Stomach (tissue), 19 donors: ENCODE measurements at regions of chr3 and their contacts with region 1.

Region 1: GRCh38 chr3:79032686-79033318 is 735.0 kb downstream of the ROBO1 start:
- DNase-seq: peak in 1 of 2 donors; percentile 81
- H3K4me3 ChIP-seq: no peak overlapping the region
- H3K27ac ChIP-seq: no peak overlapping the region
- H3K4me1 ChIP-seq: no peaks in the 10 kb centered on the region
- H3K27me3 ChIP-seq: no peaks in the 10 kb centered on the region
- CTCF ChIP-seq: peak in 5 of 7 experiments; percentile 6 to 52 (median 47)
- EP300 ChIP-seq: no peak
- POLR2A ChIP-seq: no peak

Region 2: GRCh38 chr3:78660957-78661356 is 371.8 kb before region 1 on chr3:
- intact Hi-C with region 1: loop called (anchors 5 kb)
- DNase-seq: no peak
- H3K4me3 ChIP-seq: no peak overlapping the region
- H3K27ac ChIP-seq: no peak overlapping the region
- H3K4me1 ChIP-seq: no peaks in the 10 kb centered on the region
- H3K27me3 ChIP-seq: no peaks in the 10 kb centered on the region
- CTCF ChIP-seq: no peak
- EP300 ChIP-seq: no peak
- POLR2A ChIP-seq: no peak